ENCODE measurements at regions of chr3 and their contacts with region 1.

Region 1: DNA sequence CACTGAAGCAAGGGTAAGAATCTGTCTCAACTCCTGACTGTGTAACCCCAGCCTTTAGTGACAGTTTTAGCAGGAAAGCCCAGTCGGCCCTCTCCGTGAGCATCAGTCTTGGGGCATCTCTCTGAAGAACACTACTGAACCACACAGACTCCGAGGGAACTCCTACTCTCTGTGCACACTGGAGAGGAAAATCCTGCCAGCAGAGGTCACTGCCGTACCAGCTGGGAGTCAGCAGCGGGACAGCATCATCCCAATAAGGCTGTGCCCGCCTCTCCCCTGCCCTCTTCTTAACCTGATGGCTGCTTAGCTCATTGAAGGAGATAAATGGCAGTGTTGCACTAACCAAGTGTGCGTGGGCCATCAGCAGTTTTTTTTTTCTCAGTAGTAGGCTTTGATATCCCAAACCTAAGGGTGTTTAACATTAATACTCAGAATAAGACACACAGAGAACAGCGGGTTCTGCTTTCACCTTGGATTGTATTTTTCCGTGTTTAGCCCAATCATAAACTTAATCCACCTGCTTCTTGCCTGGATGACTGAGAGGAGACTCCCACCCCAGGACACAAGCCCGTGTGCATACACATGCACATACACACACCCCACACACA is 26.6 kb upstream of the RASA2 start:
- DNase-seq: peak; percentile 77 to 92 (median 88)
- ATAC-seq: peak; percentile 100
- H3K4me3 ChIP-seq: no peak overlapping the region
- H3K4me3 Mint-ChIP-seq: no peak overlapping the region
- H3K27ac ChIP-seq: no peak overlapping the region
- H3K27ac Mint-ChIP-seq: no peak overlapping the region
- H3K4me1 ChIP-seq: no peaks in the 10 kb centered on the region
- H3K4me1 Mint-ChIP-seq: peaks cover 6% of the 10 kb centered on the region
- H3K27me3 ChIP-seq: no peaks in the 10 kb centered on the region
- H3K27me3 Mint-ChIP-seq: peaks cover 2% of the 10 kb centered on the region
- CTCF ChIP-seq: peak; percentile 93

Region 2: DNA sequence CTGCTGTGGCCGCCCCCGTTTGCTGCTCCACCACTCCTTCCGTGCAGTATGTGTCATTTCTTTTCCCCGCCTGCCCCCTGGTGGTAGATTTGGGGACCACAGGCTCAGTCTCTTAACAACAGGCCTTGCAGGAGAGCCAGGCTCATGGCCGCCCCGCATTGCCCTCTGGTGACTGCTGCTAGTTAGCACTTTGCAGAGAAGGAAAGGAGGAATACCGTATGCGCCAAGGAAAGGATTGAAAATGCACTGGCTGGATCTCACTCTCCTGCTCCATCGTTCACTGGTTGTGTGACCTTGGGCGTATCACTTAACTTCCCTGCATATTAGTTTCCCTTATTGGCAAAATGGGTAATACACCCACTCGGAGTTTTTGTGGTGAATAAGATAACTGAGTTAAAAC is 267.9 kb before region 1 on chr3:
- CTCF ChIA-PET with region 1: no interaction called
- POLR2A ChIA-PET with region 1: no interaction called
- intact Hi-C with region 1: no loop called
- DNase-seq: peak; percentile 93 to 99 (median 97)
- ATAC-seq: peak; percentile 100
- H3K4me3 ChIP-seq: no peak overlapping the region
- H3K4me3 Mint-ChIP-seq: no peak overlapping the region
- H3K27ac ChIP-seq: no peak overlapping the region
- H3K27ac Mint-ChIP-seq: no peak overlapping the region
- H3K4me1 ChIP-seq: no peaks in the 10 kb centered on the region
- H3K4me1 Mint-ChIP-seq: peaks cover 11% of the 10 kb centered on the region
- H3K27me3 ChIP-seq: no peaks in the 10 kb centered on the region
- H3K27me3 Mint-ChIP-seq: peaks cover 2% of the 10 kb centered on the region
- CTCF ChIP-seq: peak; percentile 93

Region 3: GRCh38 chr3:141360888-141361598 is 99.2 kb before region 1 on chr3:
- CTCF ChIA-PET with region 1: interaction called, 118 read pairs
- POLR2A ChIA-PET with region 1: no interaction called
- intact Hi-C with region 1: no loop called
- DNase-seq: peak in 2 of 9 experiments; percentile 60 to 72
- ATAC-seq: peak; percentile 68
- H3K4me3 ChIP-seq: no peak overlapping the region
- H3K4me3 Mint-ChIP-seq: peak overlapping the region; percentile 48
- H3K27ac ChIP-seq: no peak overlapping the region
- H3K27ac Mint-ChIP-seq: no peak overlapping the region
- H3K4me1 ChIP-seq: peaks cover 4% of the 10 kb centered on the region
- H3K4me1 Mint-ChIP-seq: peaks cover 7% of the 10 kb centered on the region
- H3K27me3 ChIP-seq: no peaks in the 10 kb centered on the region
- H3K27me3 Mint-ChIP-seq: no peaks in the 10 kb centered on the region
- CTCF ChIP-seq: peak; percentile 69

Region 4: DNA sequence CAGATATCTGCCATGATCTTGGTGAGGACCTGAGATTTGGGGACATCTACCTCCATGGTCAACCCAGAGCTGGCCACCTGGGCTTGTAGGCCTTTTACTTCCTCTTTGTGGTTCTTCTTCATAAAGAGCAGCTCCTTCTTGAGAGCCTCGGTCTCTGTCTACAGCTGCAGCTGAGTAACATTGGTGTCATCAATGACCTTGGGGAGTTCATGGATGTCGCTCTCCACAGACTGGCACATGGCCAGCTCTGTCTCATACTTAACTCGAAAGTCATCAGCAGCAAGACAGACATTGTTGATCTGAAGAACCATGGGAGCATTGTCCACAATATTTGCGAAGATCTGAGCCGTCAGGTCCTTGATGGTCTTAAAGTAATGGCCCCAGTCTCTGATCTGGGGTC is 11.0 kb after region 1 on chr3:
- CTCF ChIA-PET with region 1: interaction called, 52 read pairs
- POLR2A ChIA-PET with region 1: no interaction called
- intact Hi-C with region 1: loop called in 1 of 2 experiments (anchors 1 kb)
- DNase-seq: no peak
- ATAC-seq: no peak
- H3K4me3 ChIP-seq: no peak overlapping the region
- H3K4me3 Mint-ChIP-seq: no peak overlapping the region
- H3K27ac ChIP-seq: no peak overlapping the region
- H3K27ac Mint-ChIP-seq: no peak overlapping the region
- H3K4me1 ChIP-seq: peaks cover 18% of the 10 kb centered on the region
- H3K4me1 Mint-ChIP-seq: peaks cover 18% of the 10 kb centered on the region
- H3K27me3 ChIP-seq: no peaks in the 10 kb centered on the region
- H3K27me3 Mint-ChIP-seq: no peaks in the 10 kb centered on the region
- CTCF ChIP-seq: no peak

Region 5: GRCh38 chr3:141561426-141562034 is 101.3 kb after region 1 on chr3:
- CTCF ChIA-PET with region 1: interaction called, 283 read pairs
- POLR2A ChIA-PET with region 1: interaction called, 7 read pairs
- intact Hi-C with region 1: loop called (anchors 1 kb)
- DNase-seq: peak in 6 of 9 experiments; percentile 28 to 83 (median 46)
- ATAC-seq: peak; percentile 78
- H3K4me3 ChIP-seq: no peak overlapping the region
- H3K4me3 Mint-ChIP-seq: no peak overlapping the region
- H3K27ac ChIP-seq: no peak overlapping the region
- H3K27ac Mint-ChIP-seq: peak overlapping the region; percentile 66
- H3K4me1 ChIP-seq: peaks cover 46% of the 10 kb centered on the region
- H3K4me1 Mint-ChIP-seq: peaks cover 38% of the 10 kb centered on the region
- H3K27me3 ChIP-seq: no peaks in the 10 kb centered on the region
- H3K27me3 Mint-ChIP-seq: no peaks in the 10 kb centered on the region
- CTCF ChIP-seq: peak; percentile 100

Region 6: DNA sequence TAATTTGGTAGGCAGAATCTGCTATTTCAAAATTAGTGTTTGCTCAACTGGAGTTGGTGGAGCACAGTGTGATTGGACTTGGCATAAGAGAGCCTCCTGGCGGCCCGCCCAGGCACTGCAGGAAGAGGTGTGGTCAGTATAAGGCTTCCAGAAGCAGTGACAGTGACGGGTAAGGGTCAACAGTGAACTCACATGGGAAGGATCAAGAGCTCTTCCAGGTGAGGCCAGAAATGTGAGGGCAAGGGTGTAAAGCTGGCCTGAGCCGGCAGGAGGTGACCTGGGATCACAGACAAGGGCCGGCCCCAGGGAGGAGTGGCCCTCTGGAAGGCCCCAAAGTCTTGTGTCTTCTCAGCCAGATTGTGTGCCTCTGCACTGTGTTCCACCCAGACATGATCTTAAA is 184.7 kb after region 1 on chr3:
- CTCF ChIA-PET with region 1: interaction called, 16 read pairs
- POLR2A ChIA-PET with region 1: no interaction called
- intact Hi-C with region 1: loop called in 1 of 2 experiments (anchors 1 kb)
- DNase-seq: peak; percentile 32 to 78 (median 64)
- ATAC-seq: peak; percentile 77
- H3K4me3 ChIP-seq: no peak overlapping the region
- H3K4me3 Mint-ChIP-seq: no peak overlapping the region
- H3K27ac ChIP-seq: no peak overlapping the region
- H3K27ac Mint-ChIP-seq: no peak overlapping the region
- H3K4me1 ChIP-seq: no peaks in the 10 kb centered on the region
- H3K4me1 Mint-ChIP-seq: no peaks in the 10 kb centered on the region
- H3K27me3 ChIP-seq: no peaks in the 10 kb centered on the region
- H3K27me3 Mint-ChIP-seq: no peaks in the 10 kb centered on the region
- CTCF ChIP-seq: peak; percentile 80

Region 7: GRCh38 chr3:141913150-141913811 is 453.1 kb after region 1 on chr3:
- CTCF ChIA-PET with region 1: interaction called, 18 read pairs
- POLR2A ChIA-PET with region 1: no interaction called
- intact Hi-C with region 1: loop called (anchors 1 to 5 kb)
- DNase-seq: peak in 8 of 9 experiments; percentile 21 to 78 (median 47)
- ATAC-seq: peak; percentile 80
- H3K4me3 ChIP-seq: no peak overlapping the region
- H3K4me3 Mint-ChIP-seq: no peak overlapping the region
- H3K27ac ChIP-seq: peak overlapping the region in 1 of 2 experiments; percentile 23
- H3K27ac Mint-ChIP-seq: no peak overlapping the region
- H3K4me1 ChIP-seq: no peaks in the 10 kb centered on the region
- H3K4me1 Mint-ChIP-seq: no peaks in the 10 kb centered on the region
- H3K27me3 ChIP-seq: no peaks in the 10 kb centered on the region
- H3K27me3 Mint-ChIP-seq: no peaks in the 10 kb centered on the region
- CTCF ChIP-seq: peak; percentile 77

Measured in CD8-positive, alpha-beta T cell (primary cell).